Activated naive CD4-positive, alpha-beta T cell treated with anti-CD3 and anti-CD28 coated beads for 36 hours (primary cell): ENCODE measurements at regions of chr9 and their contacts with region 1.

Region 1: DNA sequence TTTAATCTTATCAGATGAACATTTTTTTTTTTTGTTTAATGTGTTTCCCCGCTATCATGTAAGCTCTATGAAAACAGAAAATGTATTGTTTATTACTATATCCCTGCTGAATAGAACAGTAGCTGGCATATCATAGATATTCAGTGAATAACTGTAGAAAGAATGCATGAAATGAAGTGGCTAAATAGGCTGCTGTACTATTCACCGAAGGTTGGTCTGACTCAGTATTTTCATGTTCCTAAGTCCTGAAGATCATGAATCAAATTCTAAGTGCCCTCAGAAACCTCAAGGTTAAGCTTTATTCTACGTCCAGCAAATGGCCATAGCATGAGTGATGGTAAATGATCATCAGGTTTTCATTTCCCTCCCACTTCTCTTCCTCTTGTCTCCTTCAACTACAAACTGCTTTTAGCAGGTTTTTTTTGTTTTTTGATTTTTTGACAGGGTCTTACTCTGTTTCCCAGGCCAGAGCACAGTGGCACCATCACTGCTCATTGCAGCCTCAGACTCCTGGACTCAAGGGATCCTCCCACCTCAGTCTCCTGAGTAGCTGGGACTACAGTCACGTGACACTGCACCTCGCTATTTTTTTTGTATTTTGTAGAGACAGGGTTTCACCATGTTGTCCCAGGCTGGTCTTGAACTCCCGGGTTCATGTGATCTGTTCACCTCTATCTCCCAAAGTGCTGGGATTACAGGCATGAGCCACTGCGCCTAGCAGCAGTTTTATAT is 19.1 kb upstream of the ZFAND5 start:
- DNase-seq: no peak
- H3K4me3 Mint-ChIP-seq: no peak overlapping the region
- H3K27ac Mint-ChIP-seq: no peak overlapping the region
- H3K4me1 Mint-ChIP-seq: peaks cover 6% of the 10 kb centered on the region
- H3K27me3 Mint-ChIP-seq: no peaks in the 10 kb centered on the region

Region 2: GRCh38 chr9:72262063-72262462 is 122.1 kb before region 1 on chr9:
- CTCF ChIA-PET with region 1: no interaction called
- intact Hi-C with region 1: no loop called
- DNase-seq: no peak
- H3K4me3 Mint-ChIP-seq: no peak overlapping the region
- H3K27ac Mint-ChIP-seq: no peak overlapping the region
- H3K4me1 Mint-ChIP-seq: no peaks in the 10 kb centered on the region
- H3K27me3 Mint-ChIP-seq: peaks cover 10% of the 10 kb centered on the region

Region 3: DNA sequence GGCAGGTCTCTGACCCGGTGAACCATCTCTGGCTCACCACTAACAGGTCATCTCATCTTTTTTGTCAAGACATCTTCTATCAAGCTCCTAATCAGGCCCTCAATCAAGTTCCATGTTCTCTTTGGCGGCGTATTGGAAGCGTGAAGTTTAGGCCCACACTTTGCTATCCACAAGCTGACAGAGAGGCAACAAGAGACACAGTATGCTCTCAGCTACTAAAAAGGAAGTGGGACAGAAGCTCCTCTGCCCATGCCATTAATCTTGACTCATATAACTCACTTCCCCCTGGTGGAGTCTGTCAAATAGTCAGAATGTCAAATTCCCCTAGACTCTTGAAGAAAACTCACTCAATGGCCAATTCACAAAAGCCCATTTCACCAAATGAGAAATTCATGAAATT is 59.7 kb after region 1 on chr9:
- CTCF ChIA-PET with region 1: no interaction called
- intact Hi-C with region 1: loop called (anchors 2 kb)
- DNase-seq: peak; percentile 12
- H3K4me3 Mint-ChIP-seq: no peak overlapping the region
- H3K27ac Mint-ChIP-seq: no peak overlapping the region
- H3K4me1 Mint-ChIP-seq: peaks cover 14% of the 10 kb centered on the region
- H3K27me3 Mint-ChIP-seq: no peaks in the 10 kb centered on the region